ENCODE measurements at regions of chr4 and their contacts with region 1.

Region 1: DNA sequence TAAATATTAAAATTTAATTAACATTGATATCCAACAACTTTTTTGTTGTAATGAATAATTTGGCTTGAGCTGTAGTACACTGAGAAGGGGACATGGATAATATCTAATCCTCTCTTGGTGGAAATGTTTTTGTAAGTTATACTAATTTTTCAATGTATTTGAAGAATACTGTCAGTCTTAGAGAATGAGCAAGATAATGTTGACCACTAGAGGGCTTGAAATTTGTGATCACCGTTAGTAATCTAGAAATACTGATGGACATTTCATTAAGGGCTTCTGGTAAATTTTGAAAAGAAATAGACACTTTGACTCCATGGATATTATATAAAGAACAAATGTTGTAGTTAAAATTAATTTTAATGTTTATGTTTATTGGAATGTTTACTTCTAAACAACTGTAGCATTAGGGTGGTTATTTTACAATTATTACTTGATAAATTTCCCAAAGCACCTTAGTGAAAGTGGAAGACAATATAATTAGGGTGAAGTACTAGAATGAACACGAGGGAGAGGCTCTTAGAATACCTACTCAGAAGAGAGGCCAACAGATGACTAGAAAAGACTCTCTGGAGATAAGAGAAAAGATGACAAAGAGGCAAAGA is 20.0 kb upstream of the CAMK2D start:
- DNase-seq: no peak
- ATAC-seq: peak in 1 of 2 donors; percentile 31
- H3K4me3 ChIP-seq: no peak overlapping the region
- H3K27ac ChIP-seq: no peak overlapping the region
- H3K4me1 ChIP-seq: peaks cover 1% of the 10 kb centered on the region
- H3K27me3 ChIP-seq: no peaks in the 10 kb centered on the region

Region 2: GRCh38 chr4:114062499-114062898 is 281.0 kb after region 1 on chr4:
- intact Hi-C with region 1: loop called in 2 of 4 experiments (anchors 10 kb)
- DNase-seq: no peak
- ATAC-seq: no peak
- H3K4me3 ChIP-seq: no peak overlapping the region
- H3K27ac ChIP-seq: no peak overlapping the region
- H3K4me1 ChIP-seq: no peaks in the 10 kb centered on the region
- H3K27me3 ChIP-seq: no peaks in the 10 kb centered on the region

Region 3: DNA sequence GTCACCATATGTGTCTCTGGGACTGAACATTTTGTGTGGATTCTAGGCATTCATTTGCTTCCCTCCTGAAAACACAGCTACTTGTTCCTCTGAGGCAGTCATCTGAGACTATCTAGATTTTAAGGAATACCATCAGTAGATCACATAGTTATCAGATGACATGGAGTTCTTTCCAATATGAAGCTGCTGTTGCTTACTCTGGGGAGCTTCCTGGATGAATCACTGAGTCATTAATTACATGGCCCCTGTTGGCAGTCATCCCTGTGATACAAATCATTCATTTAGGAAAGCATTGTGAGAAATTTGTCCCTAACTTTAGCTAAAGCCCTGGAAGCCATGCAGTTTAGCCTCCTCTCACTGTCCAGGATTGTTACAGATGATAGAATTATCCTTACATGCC is 296.1 kb after region 1 on chr4:
- intact Hi-C with region 1: loop called in 1 of 4 experiments (anchors 10 kb)
- DNase-seq: no peak
- ATAC-seq: no peak
- H3K4me3 ChIP-seq: no peak overlapping the region
- H3K27ac ChIP-seq: no peak overlapping the region
- H3K4me1 ChIP-seq: no peaks in the 10 kb centered on the region
- H3K27me3 ChIP-seq: no peaks in the 10 kb centered on the region

Region 4: DNA sequence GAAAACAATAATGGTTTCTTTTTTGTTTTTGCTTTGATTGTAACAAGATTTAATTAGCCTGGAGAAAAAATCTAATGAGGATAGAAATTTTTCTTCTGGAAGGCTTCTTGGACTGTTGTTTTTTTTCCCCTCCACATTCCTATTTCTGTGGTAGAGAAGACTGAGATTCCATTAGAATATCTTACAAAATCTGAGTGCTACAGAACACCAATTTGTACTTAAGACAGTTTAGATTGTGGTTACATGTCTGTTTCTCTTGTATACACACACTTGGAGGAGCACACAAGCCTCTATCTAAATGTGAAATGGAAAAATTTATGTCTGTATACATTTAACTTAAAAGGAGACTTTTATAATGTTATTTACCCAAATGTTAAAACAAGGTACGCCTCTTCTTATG is 374.8 kb after region 1 on chr4:
- intact Hi-C with region 1: no loop called
- DNase-seq: no peak
- ATAC-seq: no peak
- H3K4me3 ChIP-seq: no peak overlapping the region
- H3K27ac ChIP-seq: no peak overlapping the region
- H3K4me1 ChIP-seq: no peaks in the 10 kb centered on the region
- H3K27me3 ChIP-seq: no peaks in the 10 kb centered on the region

Region 5: GRCh38 chr4:114378306-114378903 is 596.9 kb after region 1 on chr4:
- intact Hi-C with region 1: loop called in 1 of 4 experiments (anchors 10 kb)
- DNase-seq: no peak
- ATAC-seq: no peak
- H3K4me3 ChIP-seq: no peak overlapping the region
- H3K27ac ChIP-seq: no peak overlapping the region
- H3K4me1 ChIP-seq: no peaks in the 10 kb centered on the region
- H3K27me3 ChIP-seq: no peaks in the 10 kb centered on the region

Measured in right cardiac atrium (tissue), 5 donors.